AG04450 (cell line): ENCODE measurements at regions of chr3 and their contacts with region 1.

Region 1: GRCh38 chr3:22960105-22960984 is 242.8 kb upstream of the UBE2E2 start:
- DNase-seq: no peak
- H3K4me3 ChIP-seq: no peak overlapping the region
- H3K27ac ChIP-seq: no peak overlapping the region
- H3K27me3 ChIP-seq: peaks cover 4% of the 10 kb centered on the region
- CTCF ChIP-seq: peak; percentile 82

Region 2: DNA sequence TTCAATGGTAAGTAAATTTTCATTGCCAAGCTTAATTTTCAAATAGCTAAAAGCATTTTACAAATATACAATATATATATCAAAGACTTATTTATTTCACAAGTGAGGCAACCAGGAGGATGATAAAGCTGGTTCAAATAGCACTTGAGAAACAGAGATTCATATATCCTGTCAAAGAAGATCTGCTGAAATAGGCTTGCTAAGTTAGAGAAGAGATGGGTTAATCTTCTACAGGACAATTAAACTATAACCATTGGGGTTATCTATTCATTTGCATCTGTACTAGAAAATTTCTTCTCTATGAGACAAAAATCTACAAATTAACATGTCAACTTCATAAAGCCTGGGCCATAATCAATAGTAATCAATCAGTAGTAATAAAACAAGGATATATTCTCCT is 395.0 kb before region 1 on chr3:
- CTCF ChIA-PET with region 1: interaction called, 23 read pairs
- POLR2A ChIA-PET with region 1: no interaction called
- DNase-seq: no peak
- H3K4me3 ChIP-seq: no peak overlapping the region
- H3K27ac ChIP-seq: no peak overlapping the region
- H3K27me3 ChIP-seq: no peaks in the 10 kb centered on the region
- CTCF ChIP-seq: no peak

Region 3: GRCh38 chr3:22922317-22922716 is 38.0 kb before region 1 on chr3:
- CTCF ChIA-PET with region 1: interaction called, 10 read pairs
- POLR2A ChIA-PET with region 1: no interaction called
- DNase-seq: no peak
- H3K4me3 ChIP-seq: no peak overlapping the region
- H3K27ac ChIP-seq: no peak overlapping the region
- H3K27me3 ChIP-seq: no peaks in the 10 kb centered on the region
- CTCF ChIP-seq: peak; percentile 36

Region 4: DNA sequence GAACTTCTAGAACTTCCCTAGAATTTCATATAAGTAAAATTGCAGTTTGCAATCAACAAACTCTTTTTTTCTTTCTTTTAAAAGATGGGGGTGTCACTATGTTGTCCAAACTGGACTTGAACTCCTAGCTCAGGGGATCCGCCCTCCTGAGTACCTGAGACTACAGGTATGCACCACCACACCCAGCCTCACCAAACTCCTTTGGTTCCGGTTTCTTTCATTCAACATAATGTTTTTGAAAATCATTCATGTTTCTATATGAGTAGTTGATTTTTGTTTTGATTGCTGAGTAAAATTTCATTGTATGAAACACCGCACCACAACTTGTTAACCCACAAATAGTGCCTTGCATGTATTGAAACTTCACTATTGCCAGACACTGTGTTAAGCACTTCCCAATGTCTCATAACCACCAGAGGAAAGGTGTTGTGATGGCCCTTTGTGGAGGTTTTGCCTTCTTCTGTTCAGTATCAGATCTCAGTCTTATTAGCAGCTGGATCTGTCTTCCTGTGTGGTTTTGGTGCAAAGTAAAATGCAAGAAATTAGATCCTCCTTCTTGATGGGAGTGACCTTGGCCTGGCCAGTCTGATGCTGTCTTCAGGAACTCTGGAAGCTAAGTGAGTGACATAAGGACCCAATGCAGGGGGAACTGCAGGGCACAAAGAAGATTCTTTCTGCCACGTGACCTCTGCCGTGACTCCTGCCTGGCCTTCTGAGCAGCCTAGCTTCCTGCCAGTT is 766.6 kb after region 1 on chr3:
- CTCF ChIA-PET with region 1: no interaction called
- POLR2A ChIA-PET with region 1: no interaction called
- DNase-seq: no peak
- H3K4me3 ChIP-seq: no peak overlapping the region
- H3K27ac ChIP-seq: no peak overlapping the region
- H3K27me3 ChIP-seq: no peaks in the 10 kb centered on the region
- CTCF ChIP-seq: no peak